Gastrocnemius medialis (tissue), 4 donors: ENCODE measurements at regions of chr9 and their contacts with region 1.

Region 1: DNA sequence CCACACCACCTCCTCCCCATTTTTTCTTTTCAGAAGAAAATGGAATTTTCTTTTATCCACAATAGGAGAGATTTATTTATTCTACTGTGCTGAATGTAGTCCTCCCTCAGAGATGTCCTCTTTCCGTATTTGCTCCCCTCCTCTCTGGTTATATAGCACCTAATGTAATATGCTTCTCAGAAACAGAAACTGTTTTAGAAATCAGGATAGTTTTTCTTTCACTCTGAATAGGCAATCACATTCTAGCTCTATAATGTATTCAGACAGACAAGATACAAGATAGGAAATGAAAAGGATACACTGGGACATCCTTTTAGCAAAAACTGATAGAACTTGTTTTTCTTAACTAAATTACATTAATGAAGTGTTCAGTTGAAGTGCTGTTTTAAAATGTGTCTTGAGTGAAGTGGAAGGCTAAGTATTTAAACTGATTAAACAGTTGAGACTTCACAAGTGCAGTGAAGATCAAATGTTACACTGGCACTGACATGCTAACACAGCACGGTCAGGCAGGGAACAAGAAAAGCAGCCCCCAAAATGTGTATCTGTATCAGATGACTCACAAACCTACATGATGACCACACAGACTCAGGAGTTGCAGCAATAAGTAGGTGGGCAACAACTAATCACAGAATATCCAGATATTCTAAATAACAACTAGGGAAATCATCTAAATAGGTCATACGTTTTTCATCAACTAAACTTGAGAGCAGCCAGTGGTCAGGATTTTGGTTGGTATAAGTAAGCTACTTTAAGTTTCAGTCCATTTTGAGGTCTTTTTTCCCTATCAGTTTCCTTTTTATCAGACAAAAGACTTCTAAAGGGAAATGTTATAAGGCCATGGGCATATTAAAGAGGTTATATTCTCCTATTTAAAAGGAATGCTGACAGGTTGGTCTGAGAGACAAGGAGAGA is 260.4 kb downstream of the MLLT3 start:
- DNase-seq: no peak
- ATAC-seq: no peak
- H3K4me3 ChIP-seq: no peak overlapping the region
- H3K27ac ChIP-seq: no peak overlapping the region
- H3K4me1 ChIP-seq: peaks cover 12 to 28% of the 10 kb centered on the region in 2 donors
- H3K27me3 ChIP-seq: no peaks in the 10 kb centered on the region
- CTCF ChIP-seq: no peak
- POLR2A ChIP-seq: no peak

Region 2: DNA sequence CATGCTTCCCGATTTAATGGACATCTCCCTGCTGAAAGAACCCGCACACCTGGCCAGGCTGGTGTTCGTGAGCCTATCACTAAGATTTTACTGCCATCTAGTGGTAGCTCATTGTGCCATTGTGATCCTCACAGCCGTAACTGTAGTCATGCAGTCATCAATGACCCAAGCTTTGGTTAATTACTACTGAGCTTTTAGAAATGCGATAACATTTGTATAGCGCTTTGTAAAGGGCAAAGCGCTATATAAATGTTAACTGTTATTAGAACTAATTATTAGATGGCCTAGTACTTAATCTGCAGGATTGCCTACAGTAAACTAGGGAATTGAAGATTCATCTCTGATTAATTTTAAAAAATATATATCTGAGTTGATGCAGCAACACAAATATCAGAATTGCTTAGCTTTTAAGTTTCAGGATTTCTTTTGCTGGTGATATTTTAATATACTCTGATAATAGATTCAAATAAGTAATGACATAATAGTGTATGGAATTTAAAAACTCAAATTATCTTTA is 579.3 kb after region 1 on chr9:
- in situ Hi-C with region 1: loop called (anchors 5 to 25 kb)
- intact Hi-C with region 1: no loop called
- DNase-seq: peak; percentile 14 to 18
- ATAC-seq: peak; percentile 87 to 93
- H3K4me3 ChIP-seq: no peak overlapping the region
- H3K27ac ChIP-seq: no peak overlapping the region
- H3K4me1 ChIP-seq: no peaks in the 10 kb centered on the region
- H3K27me3 ChIP-seq: no peaks in the 10 kb centered on the region
- CTCF ChIP-seq: peak; percentile 62 to 87 (median 72)
- POLR2A ChIP-seq: no peak